ENCODE measurements at regions of chr3 and their contacts with region 1.

Region 1: DNA sequence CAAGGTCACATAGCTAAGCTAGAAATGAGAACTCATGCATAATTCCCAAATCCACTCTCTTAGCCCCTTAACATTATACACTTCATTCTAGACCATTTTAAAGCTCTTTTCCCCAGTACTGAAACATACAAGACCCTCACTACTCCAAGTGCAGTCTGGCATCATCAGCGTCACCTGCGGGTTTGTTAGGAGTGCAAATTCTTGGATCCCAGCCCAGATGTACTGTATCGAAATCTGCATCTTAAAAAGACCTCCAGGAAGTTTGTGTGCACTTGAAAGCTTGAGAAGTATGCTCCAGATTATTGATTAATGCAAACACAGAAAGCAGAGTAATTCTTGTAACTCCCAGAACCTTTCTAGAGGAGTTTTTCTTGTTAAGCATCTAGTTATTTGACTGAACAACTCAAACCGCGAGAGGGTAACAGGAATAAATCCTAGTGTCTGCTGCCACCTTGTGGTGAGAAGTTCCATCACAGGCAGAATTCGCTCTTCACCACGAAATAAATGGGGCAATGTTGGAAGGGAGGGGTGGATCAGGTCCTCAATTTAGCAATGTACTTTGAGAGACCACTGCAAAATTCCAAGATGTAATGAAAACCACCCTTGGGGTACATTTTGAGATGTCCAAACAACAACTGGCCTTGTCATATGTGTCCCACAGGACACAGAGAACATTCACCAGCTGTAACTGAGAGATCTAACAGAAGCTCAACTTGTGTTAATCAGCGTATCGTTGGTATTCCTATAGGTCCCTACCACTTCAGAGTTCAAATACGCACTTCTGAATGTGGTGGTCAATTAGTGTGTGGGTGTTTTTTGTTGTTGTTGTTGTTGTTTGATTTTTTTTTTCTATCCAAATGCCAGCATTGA is 583 bp upstream of the C3orf49 start:
- H3K4me3 Mint-ChIP-seq: no peak overlapping the region
- H3K27ac Mint-ChIP-seq: no peak overlapping the region
- H3K4me1 Mint-ChIP-seq: no peaks in the 10 kb centered on the region
- H3K27me3 Mint-ChIP-seq: no peaks in the 10 kb centered on the region

Region 2: DNA sequence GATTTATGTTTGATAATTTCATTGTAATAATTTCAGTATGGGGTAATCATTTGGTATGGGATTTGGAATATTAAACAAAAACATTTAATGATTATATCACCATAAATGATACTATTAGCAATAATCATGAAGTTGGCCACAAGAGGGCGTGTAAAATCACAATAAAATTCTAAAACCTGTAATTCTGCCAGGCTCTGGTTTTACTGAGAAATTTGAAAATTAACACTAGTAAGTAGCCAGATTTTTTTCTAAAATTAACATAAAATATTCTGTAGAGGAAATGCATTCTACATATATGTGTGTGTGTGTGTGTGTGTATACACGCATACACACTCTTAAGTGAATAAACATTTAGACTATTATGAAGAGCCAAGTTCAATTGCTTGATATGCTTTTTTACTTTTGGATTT is 1485.7 kb before region 1 on chr3:
- intact Hi-C with region 1: loop called (anchors 5 kb)
- H3K4me3 Mint-ChIP-seq: no peak overlapping the region
- H3K27ac Mint-ChIP-seq: no peak overlapping the region
- H3K4me1 Mint-ChIP-seq: no peaks in the 10 kb centered on the region
- H3K27me3 Mint-ChIP-seq: no peaks in the 10 kb centered on the region

Region 3: DNA sequence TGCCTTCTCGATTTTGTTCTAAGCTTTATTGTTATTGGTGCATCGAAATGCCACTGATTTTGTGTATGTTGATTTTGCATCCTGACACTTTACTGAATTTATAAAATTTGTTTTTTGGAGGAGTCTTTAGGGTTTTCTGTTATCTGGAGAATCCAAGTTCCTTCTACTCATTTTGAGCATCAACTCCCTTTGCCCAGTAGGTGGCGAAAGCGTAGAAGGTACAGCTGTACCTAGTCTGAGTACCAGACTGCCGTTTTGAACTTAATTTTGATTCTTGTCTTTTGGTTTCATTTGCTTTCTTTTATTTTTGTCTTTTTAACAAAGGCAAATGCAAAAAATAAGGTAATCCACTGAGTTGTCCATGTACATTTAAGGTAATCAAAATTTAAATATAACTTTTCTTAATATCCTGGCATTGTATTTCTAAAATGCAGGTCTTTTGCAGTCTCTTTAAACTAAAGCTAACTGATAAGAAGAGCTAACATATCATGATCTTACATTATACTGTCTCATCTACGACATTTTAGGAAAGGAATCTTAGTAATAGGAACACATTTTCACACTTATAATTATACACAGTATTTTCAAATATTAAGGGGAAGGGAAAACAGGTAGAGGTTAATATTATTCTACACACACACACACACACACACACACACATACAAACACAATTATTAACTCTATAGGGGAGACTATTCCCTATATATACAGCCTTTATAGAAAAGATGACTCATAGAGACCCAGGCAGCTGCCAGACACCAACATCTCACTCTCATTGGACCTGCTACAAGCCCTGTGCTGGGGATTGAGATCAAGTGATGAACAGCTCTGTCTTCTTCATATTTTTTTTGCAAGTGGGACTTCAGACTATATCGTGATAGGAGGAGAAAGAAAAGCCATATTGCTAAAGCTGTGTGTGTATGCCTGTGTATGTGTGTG is 468.7 kb before region 1 on chr3:
- intact Hi-C with region 1: loop called (anchors 1 kb)
- H3K4me3 Mint-ChIP-seq: no peak overlapping the region
- H3K27ac Mint-ChIP-seq: no peak overlapping the region
- H3K4me1 Mint-ChIP-seq: no peaks in the 10 kb centered on the region
- H3K27me3 Mint-ChIP-seq: peaks cover 11% of the 10 kb centered on the region

Region 4: GRCh38 chr3:64039981-64040733 is 221.6 kb after region 1 on chr3:
- intact Hi-C with region 1: no loop called
- H3K4me3 Mint-ChIP-seq: no peak overlapping the region
- H3K27ac Mint-ChIP-seq: no peak overlapping the region
- H3K4me1 Mint-ChIP-seq: no peaks in the 10 kb centered on the region
- H3K27me3 Mint-ChIP-seq: peaks cover 14% of the 10 kb centered on the region

Measured in dendritic cell treated with granulocyte-macrophage colony-stimulating factor and Interleukin-4, amounts not matched to agents 40 ng/mL and 50 ng/mL, for 4 days (primary cell).